CD8-positive, alpha-beta T cell (primary cell): ENCODE measurements at regions of chr14 and their contacts with region 1.

Region 1: GRCh38 chr14:33839193-33840076 is 111.4 kb downstream of the EGLN3 start:
- DNase-seq: peak; percentile 4 to 67 (median 53)
- ATAC-seq: peak; percentile 31
- H3K4me3 ChIP-seq: no peak overlapping the region
- H3K4me3 Mint-ChIP-seq: no peak overlapping the region
- H3K27ac ChIP-seq: no peak overlapping the region
- H3K27ac Mint-ChIP-seq: no peak overlapping the region
- H3K4me1 ChIP-seq: no peaks in the 10 kb centered on the region
- H3K4me1 Mint-ChIP-seq: peaks cover 3% of the 10 kb centered on the region
- H3K27me3 ChIP-seq: no peaks in the 10 kb centered on the region
- H3K27me3 Mint-ChIP-seq: no peaks in the 10 kb centered on the region
- CTCF ChIP-seq: peak; percentile 69

Region 2: DNA sequence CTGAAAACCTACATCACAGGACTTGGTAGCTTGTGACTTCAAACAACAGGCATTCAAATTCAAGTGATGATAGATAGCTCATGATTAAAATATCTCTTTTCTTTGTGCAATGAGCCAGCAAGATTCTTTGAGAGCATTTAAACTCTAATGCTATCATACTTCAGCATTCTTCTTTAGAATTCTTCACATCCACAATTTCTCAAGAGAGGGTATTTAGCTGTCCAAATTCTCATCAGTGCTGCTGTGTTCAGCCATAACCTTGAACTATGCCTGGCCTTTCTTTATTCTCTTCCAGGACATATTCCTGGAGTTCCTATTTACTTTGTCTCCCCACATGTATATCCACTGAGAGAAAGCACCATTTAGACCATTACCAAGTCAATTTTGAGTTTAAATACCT is 209.6 kb before region 1 on chr14:
- CTCF ChIA-PET with region 1: no interaction called
- POLR2A ChIA-PET with region 1: no interaction called
- intact Hi-C with region 1: no loop called
- DNase-seq: no peak
- ATAC-seq: no peak
- H3K4me3 ChIP-seq: no peak overlapping the region
- H3K4me3 Mint-ChIP-seq: no peak overlapping the region
- H3K27ac ChIP-seq: no peak overlapping the region
- H3K27ac Mint-ChIP-seq: no peak overlapping the region
- H3K4me1 ChIP-seq: no peaks in the 10 kb centered on the region
- H3K4me1 Mint-ChIP-seq: no peaks in the 10 kb centered on the region
- H3K27me3 ChIP-seq: no peaks in the 10 kb centered on the region
- H3K27me3 Mint-ChIP-seq: no peaks in the 10 kb centered on the region
- CTCF ChIP-seq: no peak

Region 3: DNA sequence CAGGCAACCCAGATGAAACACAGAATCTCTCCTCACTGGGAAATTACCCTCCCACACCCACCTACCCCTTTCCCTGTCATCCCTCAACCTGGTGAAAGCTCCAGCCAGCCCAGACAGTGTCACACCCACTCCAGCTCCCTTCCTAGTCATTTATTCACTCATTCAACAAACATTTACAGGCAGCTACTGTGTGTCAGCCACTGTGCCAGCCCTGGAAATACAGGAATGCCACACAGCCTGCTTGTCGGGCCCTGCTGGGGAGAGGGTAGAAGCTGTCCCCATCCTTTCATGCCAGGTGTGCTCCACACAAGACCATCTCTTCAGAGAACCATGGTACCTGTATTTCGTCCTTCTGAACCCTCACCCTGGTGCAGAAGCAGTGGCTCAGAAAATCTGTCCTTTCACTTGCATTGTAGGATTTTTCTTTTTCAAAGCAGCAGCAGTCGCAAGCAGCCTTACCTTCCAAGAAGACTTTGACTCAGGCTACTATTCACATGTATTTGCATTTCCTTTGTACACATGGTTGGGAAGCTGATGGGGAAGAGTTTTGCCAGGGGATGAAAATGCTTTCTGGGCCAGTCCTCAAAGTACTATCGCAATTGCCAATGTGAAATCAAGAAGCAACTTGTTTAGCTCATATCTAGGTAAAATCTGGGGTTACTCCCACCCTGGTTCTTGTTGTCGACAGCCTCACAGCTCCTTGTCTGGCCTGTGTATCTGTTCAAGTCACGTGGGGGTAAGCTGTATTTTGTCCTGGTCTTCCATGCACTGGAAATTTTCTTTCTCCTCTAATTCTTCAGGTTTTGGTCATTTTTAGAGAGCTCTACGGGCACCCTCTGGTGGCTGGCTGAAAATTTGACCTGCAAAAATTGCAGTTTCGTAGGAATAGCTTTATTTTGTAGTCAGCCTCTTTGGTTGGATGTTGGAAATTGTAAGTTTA is 258.9 kb after region 1 on chr14:
- CTCF ChIA-PET with region 1: interaction called, 9 read pairs
- POLR2A ChIA-PET with region 1: no interaction called
- intact Hi-C with region 1: loop called in 1 of 2 experiments (anchors 1 kb)
- DNase-seq: peak in 4 of 9 experiments; percentile 6 to 32 (median 24)
- ATAC-seq: no peak
- H3K4me3 ChIP-seq: no peak overlapping the region
- H3K4me3 Mint-ChIP-seq: no peak overlapping the region
- H3K27ac ChIP-seq: no peak overlapping the region
- H3K27ac Mint-ChIP-seq: no peak overlapping the region
- H3K4me1 ChIP-seq: no peaks in the 10 kb centered on the region
- H3K4me1 Mint-ChIP-seq: peaks cover 11% of the 10 kb centered on the region
- H3K27me3 ChIP-seq: no peaks in the 10 kb centered on the region
- H3K27me3 Mint-ChIP-seq: no peaks in the 10 kb centered on the region
- CTCF ChIP-seq: no peak

Region 4: GRCh38 chr14:34227834-34228649 is 388.6 kb after region 1 on chr14:
- CTCF ChIA-PET with region 1: interaction called, 6 read pairs
- POLR2A ChIA-PET with region 1: no interaction called
- intact Hi-C with region 1: loop called in 1 of 2 experiments (anchors 1 kb)
- DNase-seq: peak in 8 of 9 experiments; percentile 18 to 59 (median 43)
- ATAC-seq: no peak
- H3K4me3 ChIP-seq: no peak overlapping the region
- H3K4me3 Mint-ChIP-seq: no peak overlapping the region
- H3K27ac ChIP-seq: no peak overlapping the region
- H3K27ac Mint-ChIP-seq: no peak overlapping the region
- H3K4me1 ChIP-seq: no peaks in the 10 kb centered on the region
- H3K4me1 Mint-ChIP-seq: no peaks in the 10 kb centered on the region
- H3K27me3 ChIP-seq: no peaks in the 10 kb centered on the region
- H3K27me3 Mint-ChIP-seq: peaks cover 8% of the 10 kb centered on the region
- CTCF ChIP-seq: peak; percentile 44

Region 5: GRCh38 chr14:34322940-34323418 is 483.5 kb after region 1 on chr14:
- CTCF ChIA-PET with region 1: no interaction called
- POLR2A ChIA-PET with region 1: no interaction called
- intact Hi-C with region 1: loop called in 1 of 2 experiments (anchors 1 kb)
- DNase-seq: peak; percentile 37 to 78 (median 69)
- ATAC-seq: no peak
- H3K4me3 ChIP-seq: no peak overlapping the region
- H3K4me3 Mint-ChIP-seq: no peak overlapping the region
- H3K27ac ChIP-seq: no peak overlapping the region
- H3K27ac Mint-ChIP-seq: no peak overlapping the region
- H3K4me1 ChIP-seq: no peaks in the 10 kb centered on the region
- H3K4me1 Mint-ChIP-seq: no peaks in the 10 kb centered on the region
- H3K27me3 ChIP-seq: no peaks in the 10 kb centered on the region
- H3K27me3 Mint-ChIP-seq: peaks cover 3% of the 10 kb centered on the region
- CTCF ChIP-seq: peak; percentile 76